Activated CD4-positive, alpha-beta memory T cell treated with anti-CD3 and anti-CD28 coated beads for 36 hours (primary cell): ENCODE measurements at regions of chr11 and their contacts with region 1.

Region 1: DNA sequence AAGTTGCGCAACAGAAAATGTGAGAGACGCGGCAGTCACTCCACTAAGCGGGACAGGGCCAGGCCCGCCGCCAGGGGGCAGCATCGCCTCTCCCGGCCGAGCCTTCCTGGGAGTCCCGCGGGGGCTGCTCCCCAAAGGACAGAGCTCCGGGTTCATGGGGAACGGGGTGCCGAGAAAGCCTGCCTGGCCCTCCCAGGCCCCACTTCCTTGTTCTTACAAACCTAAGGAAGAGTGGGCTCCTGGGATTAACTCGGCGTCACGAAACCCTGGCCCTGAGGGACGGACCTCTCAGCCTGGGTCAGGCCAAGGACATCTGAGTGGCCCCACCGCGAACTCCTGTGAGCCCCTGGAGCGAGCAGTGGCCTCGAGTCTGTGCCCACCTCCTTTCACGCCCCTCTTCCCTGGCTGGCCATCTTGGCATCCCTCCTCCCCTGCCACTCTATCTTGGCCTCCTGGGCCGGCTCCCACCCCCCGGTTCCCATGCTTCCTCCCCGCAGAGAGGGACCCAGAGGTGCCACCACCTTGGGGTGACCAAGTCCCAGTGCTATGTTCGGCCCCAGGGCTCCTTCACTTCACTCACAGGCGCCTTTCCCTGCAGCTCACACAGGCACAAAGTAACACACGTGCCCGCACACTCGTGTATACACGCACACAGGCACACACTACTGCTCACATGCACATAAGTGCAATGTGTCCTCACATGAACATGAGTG is 99.9 kb upstream of the FGF3 start:
- DNase-seq: peak; percentile 71
- H3K4me3 Mint-ChIP-seq: no peak overlapping the region
- H3K27ac Mint-ChIP-seq: no peak overlapping the region
- H3K4me1 Mint-ChIP-seq: peaks cover 1% of the 10 kb centered on the region
- H3K27me3 Mint-ChIP-seq: peaks cover 41% of the 10 kb centered on the region

Region 2: DNA sequence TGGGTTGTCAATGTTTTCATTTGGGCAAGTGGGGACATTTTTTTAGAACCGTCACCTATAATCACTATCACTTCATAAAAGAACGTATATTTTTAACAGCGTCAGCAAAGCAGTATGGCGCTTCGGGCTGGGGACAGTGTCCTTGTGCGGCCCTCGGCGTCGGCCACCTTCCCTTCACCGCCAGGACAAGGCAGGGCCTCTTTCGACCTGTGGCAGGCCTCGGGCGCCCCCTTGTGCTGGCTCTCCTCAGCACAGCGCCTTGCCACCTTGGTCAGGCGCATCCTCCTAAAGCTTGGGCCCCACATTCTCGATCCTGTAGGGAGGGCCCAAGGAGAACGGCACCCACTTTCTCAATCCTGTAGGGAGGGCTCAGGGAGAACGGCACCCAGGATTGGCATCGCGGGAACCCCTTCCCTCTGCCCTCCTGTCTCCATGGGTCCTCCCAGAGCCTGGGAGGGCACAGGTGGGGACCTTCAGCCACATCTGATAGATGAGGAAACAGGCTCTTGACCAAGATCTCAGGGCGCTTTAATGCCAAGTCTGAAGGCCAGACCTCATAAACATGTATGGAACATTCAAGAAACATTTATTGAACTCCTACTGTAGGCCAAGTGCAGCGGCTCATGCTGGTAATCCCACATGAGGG is 272.5 kb after region 1 on chr11:
- CTCF ChIA-PET with region 1: interaction called, 27 read pairs
- POLR2A ChIA-PET with region 1: no interaction called
- intact Hi-C with region 1: loop called (anchors 2 kb)
- DNase-seq: peak; percentile 75
- H3K4me3 Mint-ChIP-seq: no peak overlapping the region
- H3K27ac Mint-ChIP-seq: no peak overlapping the region
- H3K4me1 Mint-ChIP-seq: peaks cover 2% of the 10 kb centered on the region
- H3K27me3 Mint-ChIP-seq: peaks cover 13% of the 10 kb centered on the region